ENCODE measurements at regions of chr15 and their contacts with region 1.

Region 1: DNA sequence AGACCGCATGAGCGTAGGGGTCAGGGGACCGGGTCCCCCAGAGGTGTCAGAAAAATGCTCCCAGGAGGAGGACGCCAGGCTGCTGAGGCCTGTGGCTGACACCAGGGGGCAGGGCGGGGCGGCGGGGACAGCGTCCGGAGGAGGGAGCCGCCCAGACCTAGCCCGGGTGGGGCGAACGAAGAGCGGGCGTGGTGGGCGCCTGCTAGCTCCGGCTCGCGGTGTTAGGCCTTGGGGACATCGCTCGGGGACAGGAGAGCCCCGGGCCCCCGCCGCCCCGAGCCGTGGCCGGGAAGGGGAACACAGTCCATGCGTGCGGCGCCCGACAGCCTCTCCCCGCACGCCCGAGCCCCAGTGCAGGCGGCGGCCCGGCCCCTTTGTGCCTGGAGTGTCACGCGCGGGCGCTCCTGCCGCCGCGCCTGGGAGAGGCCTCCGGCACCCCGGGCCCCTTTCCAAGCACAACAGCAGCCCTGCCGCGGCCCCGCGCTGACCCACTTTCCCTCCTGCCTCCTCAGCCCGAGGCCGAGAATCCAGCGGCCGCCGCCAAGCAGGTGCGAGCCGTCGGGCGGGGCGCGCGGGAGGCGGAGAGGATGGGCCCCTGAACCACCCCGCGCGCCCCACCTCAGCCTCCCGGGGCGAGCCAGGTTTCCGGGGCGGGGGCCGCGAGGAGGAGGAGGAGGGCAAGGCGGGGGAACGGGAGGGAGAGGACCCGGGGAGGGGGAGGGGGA is 111.0 kb upstream of the KLF13 start:
- DNase-seq: peak; percentile 60 to 86 (median 78)
- ATAC-seq: peak; percentile 69
- H3K4me3 ChIP-seq: peak overlapping the region; percentile 35
- H3K4me3 Mint-ChIP-seq: peak overlapping the region; percentile 70
- H3K27ac ChIP-seq: peak overlapping the region; percentile 55 to 70
- H3K27ac Mint-ChIP-seq: peak overlapping the region; percentile 94
- H3K4me1 ChIP-seq: peaks cover 32% of the 10 kb centered on the region
- H3K4me1 Mint-ChIP-seq: peaks cover 57% of the 10 kb centered on the region
- H3K27me3 ChIP-seq: no peaks in the 10 kb centered on the region
- H3K27me3 Mint-ChIP-seq: no peaks in the 10 kb centered on the region
- CTCF ChIP-seq: peak; percentile 83

Region 2: GRCh38 chr15:31157644-31158091 is 58.0 kb before region 1 on chr15:
- CTCF ChIA-PET with region 1: no interaction called
- POLR2A ChIA-PET with region 1: no interaction called
- intact Hi-C with region 1: loop called in 1 of 2 experiments (anchors 10 kb)
- DNase-seq: no peak
- ATAC-seq: no peak
- H3K4me3 ChIP-seq: no peak overlapping the region
- H3K4me3 Mint-ChIP-seq: no peak overlapping the region
- H3K27ac ChIP-seq: no peak overlapping the region
- H3K27ac Mint-ChIP-seq: no peak overlapping the region
- H3K4me1 ChIP-seq: no peaks in the 10 kb centered on the region
- H3K4me1 Mint-ChIP-seq: no peaks in the 10 kb centered on the region
- H3K27me3 ChIP-seq: no peaks in the 10 kb centered on the region
- H3K27me3 Mint-ChIP-seq: no peaks in the 10 kb centered on the region
- CTCF ChIP-seq: no peak

Region 3: GRCh38 chr15:31254431-31255175 is 39.0 kb after region 1 on chr15:
- CTCF ChIA-PET with region 1: no interaction called
- POLR2A ChIA-PET with region 1: no interaction called
- intact Hi-C with region 1: no loop called
- DNase-seq: no peak
- ATAC-seq: no peak
- H3K4me3 ChIP-seq: no peak overlapping the region
- H3K4me3 Mint-ChIP-seq: no peak overlapping the region
- H3K27ac ChIP-seq: no peak overlapping the region
- H3K27ac Mint-ChIP-seq: no peak overlapping the region
- H3K4me1 ChIP-seq: peaks cover 28% of the 10 kb centered on the region
- H3K4me1 Mint-ChIP-seq: peaks cover 32% of the 10 kb centered on the region
- H3K27me3 ChIP-seq: peaks cover 0 to 4% of the 10 kb centered on the region in 2 experiments
- H3K27me3 Mint-ChIP-seq: no peaks in the 10 kb centered on the region
- CTCF ChIP-seq: no peak

Region 4: DNA sequence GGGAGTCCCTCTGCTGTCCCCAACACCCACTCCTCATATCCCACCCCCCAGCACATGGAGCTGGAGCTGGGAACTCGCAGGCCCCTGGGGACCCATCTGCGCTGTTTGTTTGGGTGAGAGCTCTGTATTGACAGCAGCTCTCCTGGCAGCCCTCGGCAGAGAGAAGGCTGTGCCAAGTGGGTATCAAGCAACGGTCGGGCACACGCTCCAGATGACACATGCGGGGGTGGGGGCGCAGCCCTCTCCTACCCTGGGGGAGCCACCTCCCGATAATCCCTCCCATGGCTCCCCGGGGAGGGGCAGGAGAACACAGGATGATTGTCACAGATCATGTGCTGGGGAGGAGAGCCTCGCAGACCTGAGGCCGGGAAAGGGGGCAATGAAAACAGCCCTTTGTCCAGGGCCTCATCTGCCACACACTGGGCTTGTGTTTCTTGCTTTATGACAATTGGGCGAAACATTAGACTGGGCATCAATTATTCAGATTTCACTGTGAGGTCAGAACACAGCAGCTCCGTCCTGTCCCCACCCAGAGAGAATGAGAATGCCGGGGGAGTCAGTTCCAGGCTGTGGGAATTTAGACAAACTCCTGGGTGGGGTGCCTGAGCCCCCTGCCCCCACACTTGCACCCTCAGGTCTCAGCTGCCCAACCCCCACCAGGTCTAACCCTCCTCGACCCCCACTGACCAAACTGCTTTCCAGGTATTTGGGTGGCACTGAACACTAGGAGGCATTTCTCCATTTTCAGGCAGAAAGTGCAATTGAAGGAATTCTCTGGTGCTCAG is 64.6 kb after region 1 on chr15:
- CTCF ChIA-PET with region 1: no interaction called
- POLR2A ChIA-PET with region 1: no interaction called
- intact Hi-C with region 1: no loop called
- DNase-seq: peak in 1 of 14 experiments; percentile 6
- ATAC-seq: no peak
- H3K4me3 ChIP-seq: no peak overlapping the region
- H3K4me3 Mint-ChIP-seq: no peak overlapping the region
- H3K27ac ChIP-seq: no peak overlapping the region
- H3K27ac Mint-ChIP-seq: no peak overlapping the region
- H3K4me1 ChIP-seq: peaks cover 8% of the 10 kb centered on the region
- H3K4me1 Mint-ChIP-seq: peaks cover 8% of the 10 kb centered on the region
- H3K27me3 ChIP-seq: no peaks in the 10 kb centered on the region
- H3K27me3 Mint-ChIP-seq: no peaks in the 10 kb centered on the region
- CTCF ChIP-seq: no peak

Region 5: DNA sequence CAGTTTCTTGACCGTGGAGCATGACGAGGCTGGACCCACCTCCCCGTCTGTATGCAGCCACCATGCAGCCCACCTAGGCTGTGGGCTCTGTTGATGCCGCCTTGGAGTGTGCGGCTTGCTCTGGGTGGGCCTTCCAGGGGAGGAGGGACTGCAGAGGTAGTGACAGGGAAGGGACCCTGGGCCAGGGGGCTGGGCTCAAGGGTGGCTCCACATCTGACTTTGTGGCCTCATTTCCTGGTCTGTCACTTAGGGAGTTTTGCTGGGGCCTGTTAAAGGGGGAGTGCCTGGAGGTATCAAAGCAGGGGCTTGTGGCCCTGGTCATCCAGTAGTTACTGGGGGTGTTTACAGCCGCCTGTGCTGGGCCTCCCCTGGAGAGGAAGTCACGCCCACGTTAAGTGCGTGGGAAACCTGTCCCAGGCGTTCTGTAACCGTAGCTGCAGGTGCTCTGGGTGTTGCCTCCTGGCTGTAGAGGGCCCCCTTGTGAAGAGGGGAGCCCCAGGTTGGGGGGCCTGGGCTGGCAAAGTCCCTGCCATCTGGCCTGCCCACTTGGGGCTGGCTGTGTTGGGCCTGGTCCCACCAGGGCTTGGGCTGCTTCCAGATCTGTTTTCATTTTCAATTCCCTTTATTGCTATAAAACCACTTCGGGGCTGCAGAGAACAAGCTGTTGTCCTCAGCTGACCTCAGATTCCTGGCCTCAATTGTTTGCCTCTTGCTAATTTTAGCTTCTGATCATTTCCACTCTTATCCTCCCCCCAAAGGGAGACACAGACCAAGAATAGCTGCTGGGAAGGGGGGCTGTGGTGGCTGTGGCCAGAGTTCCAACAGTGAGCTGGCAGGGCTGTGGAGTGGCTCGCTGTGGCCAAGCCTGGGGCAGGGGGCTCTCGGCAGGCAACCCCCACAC is 137.5 kb after region 1 on chr15:
- CTCF ChIA-PET with region 1: interaction called, 12 read pairs
- POLR2A ChIA-PET with region 1: interaction called, 5 read pairs
- intact Hi-C with region 1: no loop called
- DNase-seq: peak in 6 of 14 experiments; percentile 48 to 77 (median 64)
- ATAC-seq: peak; percentile 57
- H3K4me3 ChIP-seq: peak overlapping the region; percentile 21
- H3K4me3 Mint-ChIP-seq: peak overlapping the region; percentile 85
- H3K27ac ChIP-seq: peak overlapping the region; percentile 78 to 93
- H3K27ac Mint-ChIP-seq: peak overlapping the region; percentile 90
- H3K4me1 ChIP-seq: peaks cover 100% of the 10 kb centered on the region
- H3K4me1 Mint-ChIP-seq: peaks cover 97% of the 10 kb centered on the region
- H3K27me3 ChIP-seq: no peaks in the 10 kb centered on the region
- H3K27me3 Mint-ChIP-seq: no peaks in the 10 kb centered on the region
- CTCF ChIP-seq: no peak

Region 6: GRCh38 chr15:32888221-32888761 is 1672.6 kb after region 1 on chr15:
- CTCF ChIA-PET with region 1: no interaction called
- POLR2A ChIA-PET with region 1: no interaction called
- intact Hi-C with region 1: no loop called
- DNase-seq: no peak
- ATAC-seq: no peak
- H3K4me3 ChIP-seq: no peak overlapping the region
- H3K4me3 Mint-ChIP-seq: no peak overlapping the region
- H3K27ac ChIP-seq: no peak overlapping the region
- H3K27ac Mint-ChIP-seq: no peak overlapping the region
- H3K4me1 ChIP-seq: no peaks in the 10 kb centered on the region
- H3K4me1 Mint-ChIP-seq: no peaks in the 10 kb centered on the region
- H3K27me3 ChIP-seq: no peaks in the 10 kb centered on the region
- H3K27me3 Mint-ChIP-seq: no peaks in the 10 kb centered on the region
- CTCF ChIP-seq: no peak